ENCODE measurements at regions of chr7 and their contacts with region 1.

Region 1: DNA sequence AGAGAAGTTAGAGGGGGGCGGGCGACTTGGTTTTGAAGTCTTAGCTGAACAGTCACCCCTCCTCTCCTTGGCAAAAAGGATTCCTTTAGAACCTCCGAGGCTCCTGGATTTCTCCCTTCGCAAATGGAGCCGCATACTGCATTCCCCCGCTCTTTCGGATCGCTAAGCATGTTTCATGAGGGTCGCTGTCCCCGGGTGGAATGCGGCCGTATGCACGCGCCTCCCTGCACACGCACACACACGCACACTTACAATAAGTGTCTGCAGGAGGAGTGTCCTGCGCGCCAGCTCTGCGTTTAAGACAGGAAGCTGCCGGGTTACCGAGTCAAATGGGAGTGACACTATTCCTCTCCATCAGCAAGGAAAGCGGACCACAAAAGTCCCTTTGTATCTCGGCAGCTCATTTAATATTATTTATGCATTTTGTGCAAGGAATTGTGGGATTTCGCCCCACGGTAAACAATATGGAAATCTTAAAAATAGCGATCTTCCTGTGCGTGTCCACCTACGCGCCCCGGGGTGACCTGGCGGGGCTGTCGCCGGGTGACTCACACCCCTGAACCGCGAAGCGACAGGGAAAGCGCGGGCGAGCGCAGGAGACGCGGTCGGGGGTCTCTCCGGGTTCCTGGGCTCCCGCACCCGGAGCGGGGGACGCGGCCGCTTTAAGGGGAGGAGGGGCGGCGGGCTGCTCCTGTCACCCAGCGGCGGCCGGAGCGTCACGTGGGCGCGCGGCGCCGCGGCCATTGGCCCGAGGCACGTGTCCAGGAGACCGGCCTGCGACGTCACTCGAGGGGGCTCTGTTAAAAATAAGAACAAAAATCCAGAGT is 978 bp upstream of the EN2 start:
- DNase-seq: peak; percentile 82

Region 2: DNA sequence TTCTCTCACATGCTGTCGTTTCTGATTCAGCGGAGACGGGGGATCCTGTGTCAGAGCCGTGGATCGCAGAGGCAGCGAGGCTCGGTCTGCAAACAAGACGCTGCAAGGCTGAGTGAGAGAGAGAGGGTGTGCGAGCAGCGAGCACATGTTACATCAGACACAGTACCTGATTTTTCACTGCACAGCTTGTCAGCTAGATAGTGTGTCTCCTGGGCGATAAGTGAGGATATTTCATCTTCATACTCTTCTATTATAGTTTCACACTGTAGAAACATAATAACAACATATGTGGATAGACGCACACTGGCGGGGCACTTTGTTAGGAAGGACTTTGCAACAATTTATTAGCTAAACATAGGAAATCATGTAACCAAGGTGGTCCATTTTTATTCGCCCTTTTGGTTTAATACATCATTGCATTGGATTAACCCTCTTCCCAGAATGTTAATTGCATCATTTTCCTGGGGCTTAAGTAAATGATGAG is 49.9 kb after region 1 on chr7:
- intact Hi-C with region 1: loop called (anchors 5 kb)
- DNase-seq: no peak